ENCODE measurements at regions of chr1 and their contacts with region 1.

Region 1: DNA sequence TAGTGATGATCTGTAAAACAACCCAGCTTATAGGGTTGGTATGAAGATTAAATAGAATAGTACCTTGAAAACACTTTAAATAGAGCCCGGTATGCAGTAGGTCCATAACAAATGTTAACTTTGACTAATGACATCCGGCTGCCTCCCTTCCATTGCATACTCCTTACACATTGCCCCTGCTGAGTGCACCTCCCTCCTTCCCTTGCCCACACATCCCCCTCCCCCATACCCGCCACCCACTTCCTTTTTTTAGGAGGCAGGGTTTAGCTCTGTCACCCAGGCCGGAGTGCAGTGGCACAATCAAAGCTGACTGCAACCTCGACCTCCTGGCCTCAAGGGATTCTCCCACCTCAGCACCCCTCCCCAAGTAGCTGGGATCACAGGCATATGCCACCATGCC is 24.4 kb upstream of the ZC3H12A start:
- DNase-seq: no peak
- H3K4me3 ChIP-seq: no peak overlapping the region
- H3K27ac ChIP-seq: no peak overlapping the region
- H3K4me1 ChIP-seq: peaks cover 25% of the 10 kb centered on the region
- H3K27me3 ChIP-seq: no peaks in the 10 kb centered on the region
- CTCF ChIP-seq: no peak

Region 2: DNA sequence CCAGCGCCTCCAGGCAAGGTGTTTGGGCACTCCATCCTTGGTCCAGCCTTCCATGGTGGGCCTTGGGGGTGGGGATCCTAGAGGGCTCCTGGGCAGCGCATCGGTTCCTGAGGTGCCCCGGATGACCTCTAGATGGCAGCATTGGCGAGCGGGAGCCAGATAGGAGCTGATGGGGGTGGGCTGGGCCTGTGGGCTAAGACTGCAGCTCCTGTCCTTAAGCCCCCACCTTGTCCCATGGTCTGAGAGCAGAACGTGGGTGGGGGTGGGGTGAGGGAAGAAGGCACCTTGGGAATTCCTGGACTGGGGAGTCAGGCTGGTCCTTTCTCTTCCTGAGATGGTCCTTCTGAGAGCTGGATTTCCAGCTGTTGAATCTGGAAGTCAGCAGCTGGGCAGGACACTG is 873.8 kb before region 1 on chr1:
- CTCF ChIA-PET with region 1: no interaction called
- dilution Hi-C with region 1: loop called (anchors 10 kb)
- in situ Hi-C with region 1: loop called (anchors 25 kb)
- intact Hi-C with region 1: no loop called
- DNase-seq: peak; percentile 12
- H3K4me3 ChIP-seq: no peak overlapping the region
- H3K27ac ChIP-seq: no peak overlapping the region
- H3K4me1 ChIP-seq: no peaks in the 10 kb centered on the region
- H3K27me3 ChIP-seq: no peaks in the 10 kb centered on the region
- CTCF ChIP-seq: peak; percentile 79 to 95

Region 3: GRCh38 chr1:37338658-37339057 is 111.3 kb before region 1 on chr1:
- CTCF ChIA-PET with region 1: no interaction called
- dilution Hi-C with region 1: no loop called
- in situ Hi-C with region 1: no loop called
- intact Hi-C with region 1: no loop called
- DNase-seq: no peak
- H3K4me3 ChIP-seq: no peak overlapping the region
- H3K27ac ChIP-seq: no peak overlapping the region
- H3K4me1 ChIP-seq: no peaks in the 10 kb centered on the region
- H3K27me3 ChIP-seq: no peaks in the 10 kb centered on the region
- CTCF ChIP-seq: no peak

Region 4: GRCh38 chr1:37486680-37487618 is 37.0 kb after region 1 on chr1:
- CTCF ChIA-PET with region 1: interaction called, 4 read pairs
- dilution Hi-C with region 1: no loop called
- in situ Hi-C with region 1: no loop called
- intact Hi-C with region 1: loop called (anchors 1 kb)
- DNase-seq: peak; percentile 57
- H3K4me3 ChIP-seq: no peak overlapping the region
- H3K27ac ChIP-seq: peak overlapping the region; percentile 39
- H3K4me1 ChIP-seq: peaks cover 39% of the 10 kb centered on the region
- H3K27me3 ChIP-seq: no peaks in the 10 kb centered on the region
- CTCF ChIP-seq: peak; percentile 97 to 99

Region 5: DNA sequence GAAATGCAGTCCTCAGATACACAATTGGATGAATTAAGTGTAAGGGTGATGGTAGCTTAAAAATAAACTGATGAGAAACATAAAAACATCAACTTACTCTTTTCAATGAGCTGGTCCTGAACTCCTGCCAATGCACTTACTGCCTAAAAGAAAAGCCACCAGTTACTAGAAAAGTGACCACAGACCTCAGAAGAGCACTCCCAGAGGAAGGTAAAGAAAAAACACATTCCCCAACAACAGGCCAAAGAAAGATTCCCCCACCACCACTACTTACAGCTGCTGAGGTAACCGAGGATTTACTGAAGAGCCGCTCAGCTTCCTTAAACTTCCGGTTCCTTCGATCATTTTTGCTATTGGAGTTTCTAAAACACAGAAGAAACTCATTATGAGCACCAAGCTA is 59.2 kb after region 1 on chr1:
- CTCF ChIA-PET with region 1: no interaction called
- dilution Hi-C with region 1: no loop called
- in situ Hi-C with region 1: no loop called
- intact Hi-C with region 1: no loop called
- DNase-seq: peak; percentile 9
- H3K4me3 ChIP-seq: no peak overlapping the region
- H3K27ac ChIP-seq: no peak overlapping the region
- H3K4me1 ChIP-seq: peaks cover 7% of the 10 kb centered on the region
- H3K27me3 ChIP-seq: no peaks in the 10 kb centered on the region
- CTCF ChIP-seq: peak; percentile 22 to 25

Region 6: DNA sequence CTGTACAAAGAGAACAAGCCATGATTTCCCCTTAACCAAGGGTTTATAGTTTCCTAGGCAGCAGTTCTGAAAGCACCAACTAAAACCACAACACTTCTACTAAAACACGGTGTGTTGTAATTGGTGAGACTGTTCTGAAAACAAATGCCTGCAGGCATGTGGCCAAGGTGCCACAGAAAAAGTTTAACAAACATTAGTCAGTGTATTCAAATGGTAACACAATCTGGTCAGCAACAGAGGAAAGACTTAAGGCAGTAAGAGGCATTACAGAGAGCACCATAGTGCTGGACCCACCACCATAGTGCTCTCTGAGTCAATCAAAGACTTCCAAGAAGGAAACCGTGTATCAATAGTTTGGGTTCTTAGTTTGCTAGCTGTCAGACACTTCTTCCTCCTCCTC is 87.4 kb after region 1 on chr1:
- CTCF ChIA-PET with region 1: no interaction called
- dilution Hi-C with region 1: loop called (anchors 10 kb)
- in situ Hi-C with region 1: no loop called
- intact Hi-C with region 1: no loop called
- DNase-seq: peak; percentile 84
- H3K4me3 ChIP-seq: no peak overlapping the region
- H3K27ac ChIP-seq: peak overlapping the region; percentile 45
- H3K4me1 ChIP-seq: peaks cover 28% of the 10 kb centered on the region
- H3K27me3 ChIP-seq: no peaks in the 10 kb centered on the region
- CTCF ChIP-seq: no peak